Activated naive CD4-positive, alpha-beta T cell treated with anti-CD3 and anti-CD28 coated beads for 36 hours (primary cell): ENCODE measurements at regions of chr10 and their contacts with region 1.

Region 1: DNA sequence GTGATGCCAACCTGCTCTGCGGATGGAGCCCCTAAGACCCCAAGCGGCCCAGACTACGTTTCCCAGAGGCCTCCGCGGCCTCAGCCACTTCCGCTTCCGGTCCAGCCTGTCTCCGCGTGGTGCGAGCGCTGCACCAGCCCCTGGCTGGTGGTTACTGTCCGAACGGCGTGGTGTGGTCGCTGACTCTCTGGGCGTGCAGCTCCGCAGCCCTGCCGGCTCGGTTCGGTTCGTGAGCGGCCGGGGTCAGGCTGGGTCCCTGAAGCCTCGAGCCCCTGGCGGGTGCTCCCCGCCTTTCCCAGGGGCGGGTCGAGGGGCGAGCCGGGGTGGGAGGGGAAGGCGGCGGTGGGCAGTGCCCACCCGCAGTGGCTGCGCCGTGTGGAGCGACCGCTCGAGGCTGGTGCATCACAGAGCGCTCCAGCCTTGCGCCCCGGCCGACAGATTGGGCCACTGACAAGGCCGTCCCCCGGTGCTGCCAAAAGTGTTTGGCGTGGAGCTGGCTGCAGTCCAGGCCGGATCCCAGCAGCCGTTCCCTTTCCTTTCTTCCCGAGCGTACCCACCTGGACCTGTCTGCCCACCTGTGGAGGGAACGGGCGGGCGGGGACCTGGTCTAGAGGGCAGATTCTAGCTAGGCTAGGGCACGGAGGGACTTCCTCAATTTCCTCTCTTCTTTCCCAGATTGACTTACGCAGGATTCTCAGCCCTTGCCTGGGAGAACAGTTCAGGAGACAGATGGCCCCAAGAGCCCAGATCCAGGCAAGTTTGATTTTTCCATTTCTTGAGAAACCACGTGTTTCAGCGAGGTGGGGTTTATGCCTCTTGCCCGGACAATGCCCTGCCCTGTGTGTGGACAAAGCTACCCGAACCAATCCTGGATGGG is at the start of gene ZNF485:
- DNase-seq: peak; percentile 68
- H3K4me3 Mint-ChIP-seq: peak within 1 kb of the TSS; percentile 82
- H3K27ac Mint-ChIP-seq: peak within 1 kb of the TSS; percentile 72
- H3K4me1 Mint-ChIP-seq: peaks cover 35% of the 10 kb centered on the region
- H3K27me3 Mint-ChIP-seq: no peaks in the 10 kb centered on the region
- total RNA-seq, gene ZNF485: 5.2 to 5.4 TPM

Region 2: GRCh38 chr10:43235070-43235900 is 371.3 kb before region 1 on chr10:
- CTCF ChIA-PET with region 1: no interaction called
- intact Hi-C with region 1: no loop called
- DNase-seq: peak; percentile 2
- H3K4me3 Mint-ChIP-seq: no peak overlapping the region
- H3K27ac Mint-ChIP-seq: no peak overlapping the region
- H3K4me1 Mint-ChIP-seq: peaks cover 2% of the 10 kb centered on the region
- H3K27me3 Mint-ChIP-seq: peaks cover 20% of the 10 kb centered on the region

Region 3: DNA sequence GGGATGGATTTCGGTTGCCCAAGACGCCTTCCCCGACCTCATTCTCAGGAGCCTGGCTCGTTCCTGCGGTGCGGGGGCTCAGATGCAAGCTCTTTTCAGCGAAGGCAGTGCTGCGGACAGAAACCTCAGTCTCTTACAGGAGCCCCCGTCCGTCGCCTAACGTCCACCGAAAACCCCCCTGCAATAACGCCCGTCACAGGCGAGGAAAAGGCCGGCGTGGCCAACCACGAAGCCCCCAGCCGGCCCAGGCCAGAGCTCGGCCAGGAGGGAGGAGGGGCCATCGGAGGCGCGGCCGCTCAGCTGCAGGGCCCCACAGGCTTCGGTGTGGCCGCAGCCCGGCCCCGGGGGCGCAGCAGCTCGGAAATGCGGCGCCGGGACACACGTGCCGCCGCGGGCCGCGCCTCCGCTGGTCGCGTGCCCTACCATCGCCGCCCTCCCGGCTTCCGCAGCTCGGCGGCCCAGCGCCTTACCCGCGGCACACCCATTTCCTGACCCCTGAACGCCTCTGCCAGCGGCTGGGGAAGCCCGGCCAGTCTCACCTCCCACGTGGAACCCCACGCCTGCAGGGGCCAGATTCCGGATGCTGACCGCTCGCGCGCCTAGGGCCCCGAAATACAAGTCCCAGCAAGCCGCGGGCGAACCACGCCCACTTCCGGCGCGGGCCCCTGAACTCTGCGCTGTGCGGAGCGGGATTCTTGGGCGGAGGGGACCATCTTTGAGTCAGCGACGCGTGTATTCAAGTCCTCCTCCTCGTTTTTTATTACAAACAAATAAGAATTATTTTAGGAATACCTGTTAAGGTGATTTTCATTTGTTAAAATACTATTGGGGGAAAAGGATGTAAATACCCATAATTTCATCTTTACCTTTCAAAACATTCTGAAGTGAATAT is 32.3 kb before region 1 on chr10 and contains the start of gene ZNF239:
- CTCF ChIA-PET with region 1: no interaction called
- intact Hi-C with region 1: loop called (anchors 2 kb)
- DNase-seq: peak; percentile 90
- H3K4me3 Mint-ChIP-seq: peak within 1 kb of the TSS; percentile 77
- H3K27ac Mint-ChIP-seq: peak within 1 kb of the TSS; percentile 79
- H3K4me1 Mint-ChIP-seq: peaks cover 56% of the 10 kb centered on the region
- H3K27me3 Mint-ChIP-seq: no peaks in the 10 kb centered on the region
- total RNA-seq, gene ZNF239: 2.0 to 2.5 TPM

Region 4: DNA sequence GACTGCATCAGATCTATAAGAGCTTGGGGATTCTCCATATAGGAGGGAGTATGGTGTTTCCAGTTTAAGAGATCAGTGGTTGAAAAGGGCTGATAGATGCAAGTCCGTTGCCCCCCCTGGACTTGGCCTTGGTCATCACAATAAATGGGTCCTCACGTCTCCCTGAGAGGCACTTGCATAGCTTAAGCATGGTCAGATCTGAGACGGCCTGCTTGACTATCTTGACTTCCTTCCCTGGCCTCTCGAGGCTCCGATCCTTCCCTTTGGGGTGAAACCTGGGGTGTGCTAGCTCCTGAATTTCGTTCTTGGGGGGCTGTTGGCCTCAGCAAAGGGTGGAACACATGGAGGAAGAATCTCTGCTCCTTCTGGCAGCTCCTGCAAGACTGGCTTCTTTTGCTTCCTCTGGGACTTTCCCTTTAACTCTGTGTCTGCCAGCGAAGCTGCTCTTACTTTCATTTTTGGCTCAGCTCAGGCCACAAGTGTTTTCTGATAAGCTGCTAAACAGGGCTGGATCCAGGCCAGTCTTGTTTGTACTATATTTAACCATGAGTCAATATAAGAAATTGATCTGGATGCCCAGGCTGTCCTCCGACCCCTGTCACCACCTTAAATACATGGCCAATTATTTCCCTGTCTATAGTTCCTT is 11.5 kb before region 1 on chr10:
- CTCF ChIA-PET with region 1: interaction called, 3 read pairs
- intact Hi-C with region 1: loop called (anchors 1 kb)
- DNase-seq: peak; percentile 66
- H3K4me3 Mint-ChIP-seq: peak overlapping the region; percentile 53
- H3K27ac Mint-ChIP-seq: peak overlapping the region; percentile 75
- H3K4me1 Mint-ChIP-seq: peaks cover 22% of the 10 kb centered on the region
- H3K27me3 Mint-ChIP-seq: no peaks in the 10 kb centered on the region

Region 5: GRCh38 chr10:43648398-43649184 is 42.0 kb after region 1 on chr10 and contains the start of gene ZNF32:
- CTCF ChIA-PET with region 1: no interaction called
- intact Hi-C with region 1: loop called (anchors 5 kb)
- DNase-seq: peak; percentile 83
- H3K4me3 Mint-ChIP-seq: peak within 1 kb of the TSS; percentile 88
- H3K27ac Mint-ChIP-seq: peak within 1 kb of the TSS; percentile 86
- H3K4me1 Mint-ChIP-seq: peaks cover 18% of the 10 kb centered on the region
- H3K27me3 Mint-ChIP-seq: no peaks in the 10 kb centered on the region
- total RNA-seq, gene ZNF32: 17.8 to 17.9 TPM